ENCODE measurements at regions of chr3 and their contacts with region 1.

Region 1: DNA sequence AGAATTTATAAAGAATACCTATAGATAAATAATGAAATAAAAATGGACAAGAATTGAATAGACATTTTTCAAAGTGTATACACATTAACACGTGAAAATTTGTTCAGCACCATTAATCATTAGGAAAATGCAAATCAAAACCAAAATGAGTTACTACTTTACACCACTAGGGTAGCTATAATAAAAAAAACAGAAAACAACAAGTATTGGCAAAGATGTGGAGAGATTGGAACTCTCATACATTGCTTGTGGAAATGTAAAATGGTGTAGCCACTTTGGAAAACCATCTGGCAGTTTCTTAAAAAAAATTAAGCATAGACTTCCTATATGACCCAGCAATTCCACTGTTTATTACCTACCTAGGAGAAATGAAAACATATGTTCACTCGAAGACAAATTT is 172.8 kb upstream of the P2RY1 start:
- DNase-seq: no peak
- ATAC-seq: no peak
- H3K4me3 ChIP-seq: no peak overlapping the region
- H3K27ac ChIP-seq: no peak overlapping the region
- H3K4me1 ChIP-seq: peaks cover 0 to 8% (median 1%) of the 10 kb centered on the region in 9 donors
- H3K27me3 ChIP-seq: no peaks in the 10 kb centered on the region
- CTCF ChIP-seq: peak in 1 of 9 donors; percentile 21

Region 2: GRCh38 chr3:152583963-152584362 is 78.2 kb before region 1 on chr3:
- intact Hi-C with region 1: loop called in 1 of 10 experiments (anchors 10 kb)
- DNase-seq: no peak
- ATAC-seq: peak in 3 of 8 donors; percentile 34 to 69 (median 59)
- H3K4me3 ChIP-seq: no peak overlapping the region
- H3K27ac ChIP-seq: no peak overlapping the region
- H3K4me1 ChIP-seq: peaks cover 0 to 14% (median 0%) of the 10 kb centered on the region in 9 donors
- H3K27me3 ChIP-seq: no peaks in the 10 kb centered on the region
- CTCF ChIP-seq: no peak

Region 3: DNA sequence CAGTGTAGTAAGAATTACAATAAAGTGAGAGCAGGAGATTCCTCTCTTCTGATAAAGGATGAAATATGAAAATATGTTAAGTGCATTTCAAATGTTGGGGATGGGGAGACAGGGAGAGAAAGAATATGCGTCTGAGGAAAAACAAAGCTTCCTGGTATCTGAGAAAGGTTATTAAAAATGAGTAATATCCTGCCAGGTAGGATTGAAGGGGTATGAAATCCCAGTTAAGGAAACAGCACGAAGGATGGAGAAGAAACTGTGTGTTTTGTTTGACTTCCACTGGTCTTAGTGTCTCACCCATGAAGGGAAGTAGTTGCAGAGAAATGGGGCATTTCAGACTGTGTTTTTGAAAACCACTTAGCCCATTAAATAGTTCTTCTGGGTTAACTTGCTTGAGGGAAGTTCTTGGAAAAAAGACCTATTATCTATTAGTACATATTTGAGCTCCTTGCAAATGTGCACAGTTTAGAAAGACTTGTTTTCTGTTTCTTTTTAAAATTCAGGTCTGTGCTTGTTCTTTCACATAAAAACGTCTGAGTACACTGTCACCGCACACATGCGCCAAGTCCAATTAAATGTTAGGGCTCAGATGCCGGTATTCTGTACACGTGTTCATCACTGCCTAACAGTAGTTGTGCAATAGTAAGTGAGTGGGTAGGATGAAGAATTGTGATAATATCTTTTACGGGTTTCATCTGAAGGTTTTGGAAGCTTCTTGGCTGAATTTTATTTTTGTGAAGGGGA is 23.3 kb before region 1 on chr3:
- intact Hi-C with region 1: loop called in 1 of 10 experiments (anchors 1 kb)
- DNase-seq: peak in 1 of 2 donors; percentile 11
- ATAC-seq: peak in 7 of 8 donors; percentile 52 to 92 (median 70)
- H3K4me3 ChIP-seq: no peak overlapping the region
- H3K27ac ChIP-seq: peak overlapping the region in 6 of 10 donors; percentile 15 to 71 (median 54)
- H3K4me1 ChIP-seq: peaks cover 0 to 6% (median 0%) of the 10 kb centered on the region in 9 donors
- H3K27me3 ChIP-seq: no peaks in the 10 kb centered on the region
- CTCF ChIP-seq: no peak

Measured in heart right ventricle (tissue), 16 donors.